ENCODE measurements at regions of chr4 and their contacts with region 1.

Region 1: DNA sequence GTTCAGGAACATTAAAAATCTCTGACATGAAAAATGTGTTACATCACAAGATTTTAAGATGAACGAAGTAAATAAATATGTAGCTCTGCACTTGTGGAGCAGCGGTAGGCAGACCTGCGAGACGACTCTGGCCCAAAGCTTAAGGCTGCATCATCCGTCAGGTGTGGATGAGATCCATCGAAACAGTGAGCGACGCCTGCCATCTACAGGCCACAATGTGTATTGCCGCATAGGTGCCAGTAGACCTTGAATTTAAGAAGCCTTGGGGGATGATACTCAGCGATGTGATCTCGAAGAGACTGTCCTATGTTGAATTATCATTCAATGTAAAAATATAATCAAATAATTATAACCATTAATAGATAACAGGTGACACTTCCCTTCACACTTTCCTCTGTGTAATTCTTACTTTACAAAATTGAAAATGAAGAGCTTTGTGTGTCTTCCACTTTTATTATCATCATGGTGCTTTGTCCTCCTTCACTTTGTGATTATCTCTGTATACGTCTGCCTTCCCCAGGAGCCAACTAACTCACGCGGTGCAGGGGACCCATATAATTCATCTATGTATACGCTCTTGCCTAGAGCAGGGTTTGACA is 851.0 kb downstream of the RAB28 start:
- DNase-seq: peak; percentile 38 to 89 (median 77)
- ATAC-seq: peak; percentile 75 to 96 (median 91)
- H3K4me3 ChIP-seq: no peak overlapping the region
- H3K27ac ChIP-seq: no peak overlapping the region
- H3K4me1 ChIP-seq: no peaks in the 10 kb centered on the region
- H3K27me3 ChIP-seq: peaks cover 0 to 7% (median 0%) of the 10 kb centered on the region in 4 donors
- CTCF ChIP-seq: peak; percentile 62 to 84 (median 76)

Region 2: DNA sequence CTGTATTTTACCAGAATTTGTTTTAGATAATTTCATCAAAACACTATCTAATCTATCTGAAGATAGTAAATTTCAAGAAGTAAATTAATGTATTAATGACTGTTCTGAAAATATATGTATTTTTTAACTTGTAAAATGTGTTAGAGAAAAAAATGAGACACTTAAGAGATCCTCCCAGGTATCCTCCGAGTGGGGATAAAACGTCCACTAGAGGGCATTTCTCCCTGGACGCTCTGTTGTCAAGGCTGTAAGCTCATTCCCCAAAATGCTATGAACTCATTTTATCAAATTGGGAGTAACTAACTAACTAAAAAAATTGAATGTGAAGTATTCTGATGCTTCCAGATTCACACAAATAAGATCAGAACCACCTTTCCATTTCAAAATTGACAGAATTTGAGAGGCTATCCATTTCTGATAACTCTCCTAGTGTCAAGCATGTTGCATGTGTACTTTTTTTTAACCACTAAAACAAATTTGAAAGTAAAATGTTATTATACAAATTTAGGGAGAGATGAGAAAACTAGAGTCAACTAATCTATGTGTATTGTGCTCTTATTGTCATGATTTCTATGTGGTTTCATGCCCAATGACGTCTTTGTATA is 867.2 kb before region 1 on chr4:
- intact Hi-C with region 1: loop called in 1 of 3 experiments (anchors 10 kb)
- DNase-seq: peak in 1 of 6 donors; percentile 22
- ATAC-seq: peak in 2 of 4 donors; percentile 49 to 64
- H3K4me3 ChIP-seq: no peak overlapping the region
- H3K27ac ChIP-seq: no peak overlapping the region
- H3K4me1 ChIP-seq: no peaks in the 10 kb centered on the region
- H3K27me3 ChIP-seq: no peaks in the 10 kb centered on the region
- CTCF ChIP-seq: peak; percentile 25 to 69 (median 48)

Region 3: GRCh38 chr4:13160920-13161319 is 527.8 kb after region 1 on chr4:
- intact Hi-C with region 1: no loop called
- DNase-seq: no peak
- ATAC-seq: no peak
- H3K4me3 ChIP-seq: no peak overlapping the region
- H3K27ac ChIP-seq: no peak overlapping the region
- H3K4me1 ChIP-seq: no peaks in the 10 kb centered on the region
- H3K27me3 ChIP-seq: no peaks in the 10 kb centered on the region
- CTCF ChIP-seq: no peak

Measured in pancreas (tissue), 10 donors.